OCI-LY7 (cell line): ENCODE measurements at regions of chr1 and their contacts with region 1.

Region 1: GRCh38 chr1:180188091-180188506 is 33.4 kb downstream of the QSOX1 start:
- DNase-seq: peak; percentile 27
- H3K4me3 ChIP-seq: no peak overlapping the region
- H3K27ac ChIP-seq: no peak overlapping the region
- H3K4me1 ChIP-seq: no peaks in the 10 kb centered on the region
- CTCF ChIP-seq: peak; percentile 77

Region 2: DNA sequence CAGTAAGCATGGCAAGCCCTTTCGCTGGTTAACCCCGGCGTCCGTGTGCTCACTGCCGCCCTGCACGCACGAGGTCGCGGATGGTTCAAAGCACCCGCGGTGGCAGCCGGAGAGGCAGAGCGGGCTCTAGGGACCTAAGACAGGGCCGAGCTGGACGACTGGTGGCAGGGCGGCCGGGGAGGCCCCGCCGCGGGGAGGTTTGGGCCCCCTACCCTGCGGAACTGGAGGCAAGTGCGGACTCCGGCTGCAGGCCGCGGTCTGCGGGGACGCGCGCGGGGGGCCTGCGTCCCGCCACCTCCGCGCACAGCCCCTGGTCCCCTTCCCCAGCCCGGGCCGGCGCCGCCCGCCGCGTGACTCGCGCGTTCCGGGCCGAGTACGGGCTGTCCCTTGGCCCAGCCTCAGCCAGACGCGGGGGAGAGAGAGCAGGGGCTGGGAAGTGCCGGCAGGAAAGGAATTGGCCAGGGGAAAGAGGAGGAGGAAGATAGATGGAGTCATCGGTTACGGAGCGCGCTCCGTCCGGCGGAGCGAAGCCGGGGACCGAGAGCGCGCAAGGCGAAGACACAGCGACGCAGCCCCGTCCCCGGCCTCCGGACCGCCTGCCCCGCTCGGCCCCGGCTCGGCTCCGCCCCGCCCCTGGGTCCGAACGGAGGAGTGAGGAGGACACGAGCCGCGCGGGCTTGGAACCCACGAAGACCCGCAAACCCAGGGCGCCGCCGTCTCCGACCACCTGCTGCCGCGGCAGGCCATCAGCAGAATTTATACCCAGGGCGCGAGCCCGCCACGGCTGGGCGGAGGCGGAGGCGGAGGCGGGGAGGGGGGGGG is 41.3 kb after region 1 on chr1:
- CTCF ChIA-PET with region 1: no interaction called
- POLR2A ChIA-PET with region 1: no interaction called
- intact Hi-C with region 1: no loop called
- DNase-seq: peak; percentile 51
- H3K4me3 ChIP-seq: peak overlapping the region; percentile 65
- H3K27ac ChIP-seq: no peak overlapping the region
- H3K4me1 ChIP-seq: peaks cover 7% of the 10 kb centered on the region
- CTCF ChIP-seq: no peak

Region 3: DNA sequence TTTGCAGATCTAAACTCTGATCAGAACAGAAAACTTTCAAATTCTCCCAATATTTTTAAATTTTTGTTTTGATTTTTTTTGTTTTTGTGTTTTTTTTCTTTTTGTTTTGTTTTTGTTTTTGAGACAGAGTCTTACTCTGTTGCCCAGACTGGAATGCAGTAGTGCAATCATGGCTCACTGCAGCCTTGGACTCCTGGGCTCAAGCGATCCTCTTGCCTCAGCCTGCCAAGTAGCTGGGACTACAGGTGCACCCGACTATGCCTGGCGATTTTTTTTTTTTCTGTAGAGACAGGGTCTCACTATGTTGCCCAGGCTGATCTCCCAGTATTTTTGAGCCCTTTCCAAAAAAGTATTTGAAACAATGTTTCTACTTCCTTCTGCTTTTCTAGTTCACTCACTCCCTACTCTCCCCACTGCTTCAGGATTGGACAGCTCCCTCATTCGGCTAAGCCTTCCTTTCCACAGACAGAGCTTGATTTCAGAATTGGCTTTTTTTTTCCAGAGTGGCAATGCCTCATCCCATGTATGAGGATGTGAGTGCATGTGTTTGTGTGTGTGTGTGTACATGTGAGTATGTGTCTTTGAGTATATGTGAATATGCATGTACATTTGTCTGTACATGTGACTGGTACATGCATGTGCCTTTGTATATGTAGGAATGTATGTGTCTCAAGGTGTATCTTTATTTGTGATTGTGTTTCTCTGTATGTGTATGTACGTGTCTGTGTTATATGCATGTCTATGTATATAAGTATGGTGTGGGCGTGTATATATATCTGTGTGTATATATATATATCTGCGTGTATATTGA is 53.8 kb after region 1 on chr1:
- CTCF ChIA-PET with region 1: no interaction called
- POLR2A ChIA-PET with region 1: no interaction called
- intact Hi-C with region 1: loop called (anchors 2 kb)
- DNase-seq: no peak
- H3K4me3 ChIP-seq: no peak overlapping the region
- H3K27ac ChIP-seq: no peak overlapping the region
- H3K4me1 ChIP-seq: no peaks in the 10 kb centered on the region
- CTCF ChIP-seq: no peak

Region 4: GRCh38 chr1:180415985-180416633 is 228.0 kb after region 1 on chr1:
- CTCF ChIA-PET with region 1: no interaction called
- POLR2A ChIA-PET with region 1: no interaction called
- intact Hi-C with region 1: loop called (anchors 5 kb)
- DNase-seq: peak; percentile 51
- H3K4me3 ChIP-seq: no peak overlapping the region
- H3K27ac ChIP-seq: no peak overlapping the region
- H3K4me1 ChIP-seq: no peaks in the 10 kb centered on the region
- CTCF ChIP-seq: peak; percentile 92

Region 5: GRCh38 chr1:180482425-180483275 is 294.6 kb after region 1 on chr1:
- CTCF ChIA-PET with region 1: no interaction called
- POLR2A ChIA-PET with region 1: no interaction called
- intact Hi-C with region 1: loop called (anchors 2 kb)
- DNase-seq: peak; percentile 67
- H3K4me3 ChIP-seq: no peak overlapping the region
- H3K27ac ChIP-seq: no peak overlapping the region
- H3K4me1 ChIP-seq: no peaks in the 10 kb centered on the region
- CTCF ChIP-seq: peak; percentile 96